BJ (cell line): ENCODE measurements at regions of chr3 and their contacts with region 1.

Region 1: DNA sequence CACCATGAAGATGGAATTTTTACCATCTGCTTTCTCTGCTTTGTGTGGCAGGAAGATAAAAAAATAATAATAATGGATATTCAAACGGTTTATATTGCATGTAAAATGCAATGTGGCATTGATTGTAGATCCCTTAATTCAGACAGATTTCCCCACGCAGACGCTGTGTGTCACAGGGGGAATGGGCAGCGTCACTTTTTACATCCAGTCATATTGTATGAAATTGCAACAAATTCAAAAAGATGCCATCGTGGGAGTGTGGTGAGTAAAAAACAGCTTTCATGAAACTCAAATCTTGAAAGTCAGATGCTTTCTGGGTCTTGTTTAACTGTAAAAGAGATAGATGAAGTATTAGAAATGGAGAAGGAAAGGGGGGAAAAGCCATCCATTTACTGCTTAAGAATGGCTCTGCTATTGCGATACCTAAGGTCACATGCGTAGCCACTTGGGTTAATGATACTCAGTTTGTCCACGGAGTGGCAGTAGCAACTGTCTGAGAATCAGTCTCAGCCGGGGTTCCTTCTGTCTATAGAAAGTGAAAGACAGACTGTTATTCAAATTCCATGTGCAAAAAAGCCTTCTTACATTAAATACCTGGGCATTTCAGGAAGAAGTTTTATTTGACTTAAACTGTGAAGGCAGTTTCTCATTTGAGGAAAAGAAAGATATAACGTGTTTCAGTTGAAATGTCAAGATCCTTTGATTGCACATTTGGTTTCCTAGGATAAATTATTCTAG is 28.5 kb downstream of the BTD start:
- DNase-seq: no peak
- H3K4me3 ChIP-seq: peak overlapping the region; percentile 8
- H3K27me3 ChIP-seq: no peaks in the 10 kb centered on the region
- CTCF ChIP-seq: peak; percentile 71

Region 2: DNA sequence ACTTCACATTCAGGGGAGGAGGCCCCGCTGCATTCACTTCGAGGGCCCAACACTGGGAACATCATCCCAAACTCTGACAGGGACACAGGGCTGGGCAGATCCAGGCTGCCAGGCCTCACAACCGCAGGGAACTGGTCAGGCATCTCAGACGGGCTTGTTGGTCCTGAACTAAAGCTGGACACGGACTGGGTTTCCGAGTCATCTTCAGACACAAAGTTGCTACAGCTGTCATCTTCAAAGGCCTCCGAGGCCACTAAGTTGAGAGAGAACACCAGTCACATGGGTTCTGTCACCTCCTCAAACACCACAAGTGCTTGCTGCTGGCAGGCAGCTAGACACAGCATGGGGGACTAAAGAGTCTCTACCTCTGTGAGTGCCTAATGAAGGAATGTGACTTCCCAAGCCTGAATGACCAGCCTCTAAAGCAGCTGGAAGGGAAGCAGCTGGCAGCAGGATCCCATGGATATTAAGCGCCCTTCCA is 373.1 kb before region 1 on chr3:
- CTCF ChIA-PET with region 1: no interaction called
- POLR2A ChIA-PET with region 1: no interaction called
- DNase-seq: no peak
- H3K4me3 ChIP-seq: no peak overlapping the region
- H3K27me3 ChIP-seq: no peaks in the 10 kb centered on the region
- CTCF ChIP-seq: no peak

Region 3: GRCh38 chr3:15805756-15806266 is 175.8 kb after region 1 on chr3:
- CTCF ChIA-PET with region 1: interaction called, 57 read pairs
- POLR2A ChIA-PET with region 1: no interaction called
- DNase-seq: no peak
- H3K4me3 ChIP-seq: no peak overlapping the region
- H3K27me3 ChIP-seq: no peaks in the 10 kb centered on the region
- CTCF ChIP-seq: no peak